Posterior cingulate gyrus (tissue), 11 donors: ENCODE measurements at regions of chr7 and their contacts with region 1.

Region 1: DNA sequence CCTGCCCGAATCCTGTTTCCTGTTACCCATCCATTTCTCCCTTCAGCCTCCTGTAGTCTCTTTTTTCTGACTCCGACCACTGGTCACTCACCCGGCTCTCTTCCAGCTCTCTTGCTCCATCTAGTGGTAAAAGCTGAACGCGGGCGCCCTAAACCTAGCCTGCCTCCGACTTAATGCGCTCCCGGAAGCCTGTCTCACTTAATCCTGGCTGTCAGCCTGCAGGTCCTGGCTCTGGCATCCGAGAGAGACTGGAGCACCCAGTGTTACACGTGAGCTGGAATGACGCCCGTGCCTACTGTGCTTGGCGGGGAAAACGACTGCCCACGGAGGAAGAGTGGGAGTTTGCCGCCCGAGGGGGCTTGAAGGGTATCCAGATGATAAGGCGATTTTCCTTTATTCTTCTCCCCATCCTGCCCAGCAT is 10.3 kb downstream of the SUMF2 start:
- DNase-seq: peak; percentile 60 to 95 (median 76)

Region 2: GRCh38 chr7:56009695-56010094 is 64.7 kb before region 1 on chr7:
- intact Hi-C with region 1: loop called (anchors 1 kb)
- DNase-seq: peak; percentile 28 to 91 (median 56)